Aorta (tissue), 5 donors: ENCODE measurements at regions of chr6 and their contacts with region 1.

Region 1: GRCh38 chr6:39887381-39888070 is 46.7 kb downstream of the MOCS1 start:
- DNase-seq: peak; percentile 95 to 96
- ATAC-seq: peak; percentile 92
- H3K4me3 ChIP-seq: no peak overlapping the region
- H3K27ac ChIP-seq: peak overlapping the region; percentile 87 to 94
- H3K4me1 ChIP-seq: peaks cover 0 to 3% of the 10 kb centered on the region in 2 donors
- H3K27me3 ChIP-seq: no peaks in the 10 kb centered on the region

Region 2: DNA sequence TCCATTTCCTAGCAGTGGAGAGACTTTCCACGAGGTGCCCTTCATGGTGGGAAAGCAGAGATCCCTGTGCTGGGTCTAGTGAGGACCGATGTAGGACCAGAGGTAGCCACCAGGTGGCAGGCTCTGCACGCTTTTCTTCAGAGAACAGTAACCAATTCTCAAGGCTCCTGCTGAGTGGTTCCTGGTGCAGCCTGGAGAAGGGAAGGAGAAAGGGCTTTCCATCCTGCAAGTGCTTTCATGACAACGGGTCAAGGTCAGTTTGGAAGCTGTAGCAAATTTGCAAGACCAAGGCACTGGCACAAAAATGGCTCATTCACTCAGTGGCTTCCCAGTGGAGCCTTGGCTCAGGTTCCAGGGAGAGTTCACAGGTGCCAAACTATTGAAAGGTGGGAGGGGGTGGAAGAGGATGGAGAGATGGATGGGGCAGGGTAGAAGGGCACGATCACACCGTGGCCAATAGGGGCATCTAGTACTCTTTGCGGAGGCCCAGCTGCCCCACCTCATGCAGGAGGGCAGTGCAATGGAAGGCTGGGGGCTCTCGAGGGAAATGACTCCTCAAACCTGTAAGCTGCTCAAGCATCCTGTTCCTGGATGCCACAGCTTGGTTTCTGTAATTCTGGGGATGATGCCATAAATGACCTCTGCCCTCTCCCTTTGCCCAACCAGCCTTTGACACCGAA is 539.5 kb before region 1 on chr6:
- intact Hi-C with region 1: loop called in 1 of 2 experiments (anchors 10 kb)
- DNase-seq: peak; percentile 79 to 92
- ATAC-seq: peak; percentile 75
- H3K4me3 ChIP-seq: no peak overlapping the region
- H3K27ac ChIP-seq: no peak overlapping the region
- H3K4me1 ChIP-seq: no peaks in the 10 kb centered on the region
- H3K27me3 ChIP-seq: no peaks in the 10 kb centered on the region

Region 3: GRCh38 chr6:39724787-39725631 is 162.5 kb before region 1 on chr6 and contains the start of gene KIF6:
- intact Hi-C with region 1: loop called in 1 of 2 experiments (anchors 10 kb)
- DNase-seq: peak; percentile 95 to 97
- ATAC-seq: peak; percentile 97
- H3K4me3 ChIP-seq: peak within 1 kb of the TSS; percentile 56 to 82
- H3K27ac ChIP-seq: no peak within 1 kb of the TSS
- H3K4me1 ChIP-seq: no peaks in the 10 kb centered on the region
- H3K27me3 ChIP-seq: no peaks in the 10 kb centered on the region
- total RNA-seq, gene KIF6: 0.39 to 0.42 TPM

Region 4: GRCh38 chr6:39777218-39777617 is 110.3 kb before region 1 on chr6:
- intact Hi-C with region 1: no loop called
- DNase-seq: no peak
- ATAC-seq: no peak
- H3K4me3 ChIP-seq: no peak overlapping the region
- H3K27ac ChIP-seq: peak overlapping the region in 1 of 2 donors; percentile 48
- H3K4me1 ChIP-seq: peaks cover 4 to 6% of the 10 kb centered on the region in 2 donors
- H3K27me3 ChIP-seq: no peaks in the 10 kb centered on the region

Region 5: DNA sequence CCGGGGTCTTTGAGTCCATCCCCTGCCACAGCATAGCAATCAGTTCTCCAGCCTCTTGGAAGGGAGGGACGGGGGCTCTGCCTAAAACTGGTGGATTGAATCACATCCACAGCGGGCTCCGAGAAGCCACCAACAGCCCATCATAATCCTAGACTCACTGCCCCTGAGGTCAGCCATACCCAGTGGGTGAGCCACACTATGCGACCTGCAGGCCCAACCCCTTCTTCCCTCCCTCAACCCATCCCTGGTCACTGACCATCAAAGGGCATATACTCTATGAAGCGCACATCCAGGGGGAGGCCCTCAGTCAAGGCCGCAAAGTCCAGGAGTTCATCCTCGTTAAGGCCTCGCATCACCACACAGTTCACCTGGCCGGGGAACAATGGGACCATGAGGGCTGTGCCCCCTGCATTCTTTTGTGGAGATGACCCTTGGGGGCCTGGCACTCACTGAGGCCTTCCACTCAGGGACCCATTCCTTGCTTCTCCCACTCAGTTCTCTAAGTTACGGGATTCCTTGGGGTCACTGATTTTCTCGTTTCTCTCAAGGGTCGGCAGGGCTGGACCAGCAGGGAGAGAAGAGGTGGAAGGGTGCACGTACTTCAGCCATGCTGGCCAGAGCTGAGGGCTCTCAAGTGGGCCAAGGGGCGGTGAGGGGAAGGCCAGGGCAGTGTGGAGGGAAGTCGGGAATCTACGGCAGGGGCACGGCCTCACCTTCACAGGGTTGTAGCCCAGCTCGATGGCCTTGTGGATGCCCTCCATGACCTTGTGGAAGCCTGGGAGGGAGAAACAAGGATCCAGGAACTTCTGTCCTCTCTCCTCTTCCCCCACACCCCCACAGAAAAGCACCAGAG is 25.8 kb after region 1 on chr6:
- intact Hi-C with region 1: no loop called
- DNase-seq: no peak
- ATAC-seq: no peak
- H3K4me3 ChIP-seq: no peak overlapping the region
- H3K27ac ChIP-seq: no peak overlapping the region
- H3K4me1 ChIP-seq: no peaks in the 10 kb centered on the region
- H3K27me3 ChIP-seq: no peaks in the 10 kb centered on the region